ENCODE measurements at regions of chr12 and their contacts with region 1.

Region 1: DNA sequence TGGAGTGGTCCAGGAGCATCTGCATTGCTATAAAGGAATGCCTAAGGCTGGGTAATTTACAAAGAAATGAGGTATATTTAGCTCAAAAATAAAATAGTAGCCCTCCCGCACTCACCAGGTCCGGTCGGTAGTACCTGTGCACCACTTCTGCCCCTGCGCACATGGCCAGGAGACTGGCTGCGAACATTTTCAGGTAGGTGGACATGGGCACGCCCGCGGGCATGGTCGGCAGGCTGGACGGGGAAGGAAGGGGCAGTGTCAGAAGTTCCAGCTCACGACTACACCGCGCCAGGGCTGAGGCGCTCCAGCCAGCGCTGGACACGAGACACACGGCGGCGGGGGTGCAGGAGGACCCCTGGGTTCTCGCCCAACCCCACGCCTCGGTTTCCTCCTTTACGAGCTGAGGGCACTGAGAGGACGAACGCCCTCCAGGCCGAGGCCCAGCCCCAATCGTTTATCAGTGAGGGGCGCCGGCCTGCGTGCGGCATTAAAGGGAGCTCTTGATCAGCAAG is 9.1 kb upstream of the TDG start:
- DNase-seq: peak in 3 of 9 donors; percentile 4 to 7 (median 5)
- ATAC-seq: no peak
- H3K4me3 ChIP-seq: peak overlapping the region; percentile 91
- H3K4me3 Mint-ChIP-seq: peak overlapping the region; percentile 95 to 100 (median 99)
- H3K27ac ChIP-seq: peak overlapping the region; percentile 73
- H3K27ac Mint-ChIP-seq: peak overlapping the region; percentile 93 to 99 (median 98)
- H3K4me1 ChIP-seq: peaks cover 13 to 17% of the 10 kb centered on the region in 2 donors
- H3K4me1 Mint-ChIP-seq: peaks cover 25 to 58% (median 43%) of the 10 kb centered on the region in 7 donors
- H3K27me3 ChIP-seq: no peaks in the 10 kb centered on the region
- H3K27me3 Mint-ChIP-seq: no peaks in the 10 kb centered on the region

Region 2: DNA sequence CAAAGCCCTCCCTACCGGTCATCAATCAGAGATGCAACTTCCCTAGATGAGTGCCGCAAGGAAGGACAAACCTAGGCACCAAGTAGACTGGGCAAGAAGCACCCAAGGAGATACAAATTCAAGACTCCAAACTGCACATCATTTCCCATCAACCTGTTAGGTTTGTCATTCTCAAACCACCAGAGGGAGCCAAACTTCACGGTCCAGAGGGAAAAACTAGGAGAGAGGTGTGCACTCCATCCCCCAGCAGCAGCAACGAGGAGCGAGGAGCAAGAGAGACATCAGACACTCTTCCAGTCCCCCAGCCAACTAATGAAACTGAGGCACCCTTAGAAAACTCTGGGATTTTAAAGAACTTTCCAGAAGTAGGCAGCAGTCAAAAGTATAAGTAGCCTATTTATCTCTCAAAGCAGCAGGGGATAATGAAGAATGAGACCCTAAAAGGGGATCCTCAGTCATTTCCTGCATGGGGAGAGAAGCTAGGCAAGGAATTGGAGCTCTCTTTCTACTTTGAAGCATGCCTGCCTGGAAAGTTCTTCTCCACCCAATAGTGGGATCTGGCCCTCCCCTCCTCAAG is 78.5 kb before region 1 on chr12:
- CTCF ChIA-PET with region 1: interaction called, 3 read pairs
- POLR2A ChIA-PET with region 1: no interaction called
- intact Hi-C with region 1: loop called in 1 of 2 experiments (anchors 2 kb)
- DNase-seq: peak in 8 of 9 donors; percentile 43 to 61 (median 54)
- ATAC-seq: peak; percentile 83
- H3K4me3 ChIP-seq: no peak overlapping the region
- H3K4me3 Mint-ChIP-seq: peak overlapping the region in 1 of 10 donors; percentile 8
- H3K27ac ChIP-seq: no peak overlapping the region
- H3K27ac Mint-ChIP-seq: peak overlapping the region in 3 of 9 donors; percentile 2 to 80 (median 23)
- H3K4me1 ChIP-seq: no peaks in the 10 kb centered on the region
- H3K4me1 Mint-ChIP-seq: peaks cover 0 to 28% (median 12%) of the 10 kb centered on the region in 7 donors
- H3K27me3 ChIP-seq: no peaks in the 10 kb centered on the region
- H3K27me3 Mint-ChIP-seq: peaks cover 0 to 5% (median 0%) of the 10 kb centered on the region in 5 donors

Region 3: GRCh38 chr12:103884316-103884715 is 72.3 kb before region 1 on chr12:
- CTCF ChIA-PET with region 1: interaction called, 4 read pairs
- POLR2A ChIA-PET with region 1: no interaction called
- intact Hi-C with region 1: loop called (anchors 1 to 2 kb)
- DNase-seq: peak in 7 of 9 donors; percentile 36 to 68 (median 53)
- ATAC-seq: peak; percentile 68
- H3K4me3 ChIP-seq: no peak overlapping the region
- H3K4me3 Mint-ChIP-seq: peak overlapping the region in 3 of 10 donors; percentile 30 to 64 (median 39)
- H3K27ac ChIP-seq: no peak overlapping the region
- H3K27ac Mint-ChIP-seq: peak overlapping the region in 6 of 9 donors; percentile 19 to 74 (median 46)
- H3K4me1 ChIP-seq: no peaks in the 10 kb centered on the region
- H3K4me1 Mint-ChIP-seq: peaks cover 4 to 24% (median 16%) of the 10 kb centered on the region in 7 donors
- H3K27me3 ChIP-seq: no peaks in the 10 kb centered on the region
- H3K27me3 Mint-ChIP-seq: no peaks in the 10 kb centered on the region

Region 4: DNA sequence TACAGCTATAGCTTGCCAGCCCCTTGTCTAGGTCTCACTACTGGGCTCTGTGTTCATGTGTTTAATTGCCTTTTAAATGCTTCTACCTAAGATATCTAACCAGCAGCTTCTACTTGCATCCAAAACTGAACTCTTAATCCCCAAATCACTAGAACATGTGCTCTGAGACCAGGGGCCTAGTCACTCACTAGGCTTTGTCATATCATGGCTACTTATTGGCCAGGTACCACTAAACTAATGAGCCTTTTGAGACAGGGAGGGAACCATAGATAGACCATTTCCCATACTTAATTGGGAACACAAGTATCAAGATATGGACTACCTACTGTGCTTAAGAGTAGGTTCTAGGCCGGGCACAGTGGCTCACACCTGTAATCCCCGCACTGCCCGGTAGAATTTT is 19.9 kb before region 1 on chr12:
- CTCF ChIA-PET with region 1: interaction called, 3 read pairs
- POLR2A ChIA-PET with region 1: interaction called, 124 read pairs
- intact Hi-C with region 1: no loop called
- DNase-seq: no peak
- ATAC-seq: no peak
- H3K4me3 ChIP-seq: no peak overlapping the region
- H3K4me3 Mint-ChIP-seq: peak overlapping the region in 2 of 10 donors; percentile 2 to 20
- H3K27ac ChIP-seq: peak overlapping the region; percentile 22
- H3K27ac Mint-ChIP-seq: peak overlapping the region in 4 of 9 donors; percentile 49 to 65 (median 54)
- H3K4me1 ChIP-seq: peaks cover 26 to 31% of the 10 kb centered on the region in 2 donors
- H3K4me1 Mint-ChIP-seq: peaks cover 29 to 61% (median 53%) of the 10 kb centered on the region in 7 donors
- H3K27me3 ChIP-seq: no peaks in the 10 kb centered on the region
- H3K27me3 Mint-ChIP-seq: no peaks in the 10 kb centered on the region

Region 5: DNA sequence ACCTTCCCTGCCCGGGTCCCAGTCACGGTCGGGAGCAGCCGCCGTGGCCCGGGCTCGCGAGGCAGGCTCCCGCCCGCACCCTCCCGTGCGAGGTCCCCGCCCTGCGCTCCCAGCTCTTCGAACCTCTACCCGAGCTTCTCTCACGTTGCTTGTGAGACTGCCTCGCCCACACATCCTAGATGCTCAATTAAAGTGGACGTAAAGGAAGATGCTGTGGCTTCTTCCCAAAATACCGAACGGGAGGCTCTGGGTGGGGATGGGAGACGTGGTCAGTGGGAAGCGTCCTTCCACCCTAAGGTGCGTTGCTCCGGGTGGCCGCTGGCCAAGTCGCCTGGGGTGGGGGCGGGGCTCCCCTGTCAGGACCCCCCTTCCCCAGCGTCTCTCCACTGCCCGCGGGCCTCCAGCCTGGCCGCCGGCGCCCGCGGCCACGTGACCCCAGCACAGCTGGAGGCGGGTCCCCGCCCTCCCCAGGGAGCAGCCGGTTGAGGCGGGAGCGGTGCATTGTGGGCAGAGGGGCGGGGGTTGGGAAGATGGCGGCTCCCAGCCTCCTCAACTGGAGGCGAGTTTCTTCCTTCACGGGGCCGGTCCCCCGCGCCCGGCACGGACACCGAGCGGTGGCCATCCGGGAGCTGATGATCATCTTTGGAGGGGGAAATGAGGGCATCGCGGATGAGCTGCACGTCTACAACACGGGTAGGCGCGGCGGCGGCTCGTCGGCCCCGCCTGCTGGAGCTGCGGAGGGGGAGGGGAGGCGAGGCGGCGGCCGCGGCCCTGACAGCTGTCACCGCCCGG is 107.7 kb after region 1 on chr12 and contains the start of gene HCFC2:
- CTCF ChIA-PET with region 1: no interaction called
- POLR2A ChIA-PET with region 1: no interaction called
- intact Hi-C with region 1: loop called (anchors 2 kb)
- DNase-seq: peak; percentile 77 to 93 (median 83)
- ATAC-seq: peak; percentile 99
- H3K4me3 ChIP-seq: peak within 1 kb of the TSS; percentile 95
- H3K4me3 Mint-ChIP-seq: peak within 1 kb of the TSS; percentile 88 to 97 (median 94)
- H3K27ac ChIP-seq: peak within 1 kb of the TSS; percentile 79
- H3K27ac Mint-ChIP-seq: peak within 1 kb of the TSS; percentile 71 to 96 (median 90)
- H3K4me1 ChIP-seq: peaks cover 5 to 9% of the 10 kb centered on the region in 2 donors
- H3K4me1 Mint-ChIP-seq: peaks cover 13 to 31% (median 21%) of the 10 kb centered on the region in 7 donors
- H3K27me3 ChIP-seq: no peaks in the 10 kb centered on the region
- H3K27me3 Mint-ChIP-seq: peaks cover 5 to 27% (median 13%) of the 10 kb centered on the region in 5 donors
- total RNA-seq, gene HCFC2: 11.4 to 20.2 (median 16.2) TPM

Region 6: GRCh38 chr12:104137913-104138796 is 181.6 kb after region 1 on chr12 and contains the start of gene NFYB:
- CTCF ChIA-PET with region 1: no interaction called
- POLR2A ChIA-PET with region 1: interaction called, 6 read pairs
- intact Hi-C with region 1: loop called in 1 of 2 experiments (anchors 1 kb)
- DNase-seq: peak; percentile 90 to 96 (median 94)
- ATAC-seq: peak; percentile 97
- H3K4me3 ChIP-seq: peak within 1 kb of the TSS; percentile 69
- H3K4me3 Mint-ChIP-seq: peak within 1 kb of the TSS; percentile 81 to 93 (median 90)
- H3K27ac ChIP-seq: peak within 1 kb of the TSS; percentile 72
- H3K27ac Mint-ChIP-seq: peak within 1 kb of the TSS; percentile 71 to 95 (median 89)
- H3K4me1 ChIP-seq: peaks cover 10 to 23% of the 10 kb centered on the region in 2 donors
- H3K4me1 Mint-ChIP-seq: peaks cover 0 to 22% (median 9%) of the 10 kb centered on the region in 7 donors
- H3K27me3 ChIP-seq: no peaks in the 10 kb centered on the region
- H3K27me3 Mint-ChIP-seq: peaks cover 0 to 24% (median 0%) of the 10 kb centered on the region in 5 donors
- total RNA-seq, gene NFYB: 11.6 to 25.9 (median 24.4) TPM

Region 7: DNA sequence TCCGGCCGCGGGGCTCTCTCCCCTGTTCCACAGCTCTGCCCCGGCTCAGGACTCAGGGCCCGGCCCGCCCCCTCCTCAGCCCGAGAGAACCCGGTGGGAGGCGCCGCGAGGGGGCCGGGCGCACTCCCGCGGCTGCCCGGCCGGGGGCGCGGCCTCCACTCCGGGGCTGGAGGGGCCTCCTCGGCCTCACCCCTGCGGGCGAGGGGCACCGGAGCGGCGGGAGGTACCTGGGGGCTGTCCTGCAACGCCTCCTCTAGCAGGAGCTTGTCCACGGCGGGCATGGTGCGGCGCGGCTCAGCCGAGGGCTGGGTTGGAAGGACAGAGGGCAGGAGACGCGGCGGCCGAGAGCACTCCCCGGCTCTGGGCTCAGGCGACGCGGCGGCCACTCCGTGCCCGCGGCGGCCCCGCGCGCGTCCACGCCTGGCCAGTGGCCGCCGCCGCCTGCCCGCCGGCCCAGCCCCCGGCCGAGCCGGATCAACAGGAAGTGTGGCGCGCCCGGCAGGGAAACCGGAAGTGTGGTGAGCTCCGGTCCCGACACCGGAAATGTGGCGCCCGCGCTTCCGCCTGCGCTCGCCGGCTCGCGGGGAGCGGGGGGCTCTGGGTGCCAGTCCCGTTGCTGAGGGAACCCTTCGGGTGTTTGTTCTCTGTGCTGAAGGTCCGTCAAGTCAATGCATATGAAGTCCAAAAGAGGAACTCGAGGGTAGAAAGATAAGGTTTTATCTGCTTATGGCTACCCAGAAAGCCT is 1279.3 kb after region 1 on chr12 and contains the start of gene APPL2:
- CTCF ChIA-PET with region 1: no interaction called
- POLR2A ChIA-PET with region 1: no interaction called
- intact Hi-C with region 1: loop called in 1 of 2 experiments (anchors 2 kb)
- DNase-seq: peak; percentile 52 to 81 (median 71)
- ATAC-seq: peak; percentile 86
- H3K4me3 ChIP-seq: peak within 1 kb of the TSS; percentile 71
- H3K4me3 Mint-ChIP-seq: peak within 1 kb of the TSS in 9 of 10 donors; percentile 89 to 95 (median 93)
- H3K27ac ChIP-seq: peak within 1 kb of the TSS; percentile 78
- H3K27ac Mint-ChIP-seq: peak within 1 kb of the TSS; percentile 86 to 96 (median 91)
- H3K4me1 ChIP-seq: peaks cover 25 to 39% of the 10 kb centered on the region in 2 donors
- H3K4me1 Mint-ChIP-seq: peaks cover 42 to 54% (median 48%) of the 10 kb centered on the region in 7 donors
- H3K27me3 ChIP-seq: no peaks in the 10 kb centered on the region
- H3K27me3 Mint-ChIP-seq: peaks cover 0 to 3% (median 0%) of the 10 kb centered on the region in 5 donors
- total RNA-seq, gene APPL2: 31.6 to 74.5 (median 58.3) TPM

Measured in naive thymus-derived CD4-positive, alpha-beta T cell (primary cell).